K562 (cell line): ENCODE measurements at regions of chr3 and their contacts with region 1.

Region 1: GRCh38 chr3:44198284-44199269 is 43.1 kb upstream of the TOPAZ1 start:
- DNase-seq: peak; percentile 62 to 84 (median 72)
- ATAC-seq: peak; percentile 99
- H3K4me3 ChIP-seq: no peak overlapping the region
- H3K27ac ChIP-seq: no peak overlapping the region
- H3K4me1 ChIP-seq: no peaks in the 10 kb centered on the region; a peak in 1 of 5 replicates
- H3K27me3 ChIP-seq: peaks cover 0 to 7% of the 10 kb centered on the region in 2 experiments; a peak in 2 of 5 replicates
- CTCF ChIP-seq: peak; percentile 84 to 95 (median 88)
- EP300 ChIP-seq: no peak
- POLR2A ChIP-seq: no peak
- RAD21 ChIP-seq: peak; percentile 90 to 92

Region 2: GRCh38 chr3:43531835-43532234 is 666.7 kb before region 1 on chr3:
- CTCF ChIA-PET with region 1: no interaction called
- POLR2A ChIA-PET with region 1: no interaction called
- in situ Hi-C with region 1: loop called (anchors 25 kb)
- intact Hi-C with region 1: no loop called
- DNase-seq: no peak
- ATAC-seq: no peak
- H3K4me3 ChIP-seq: no peak overlapping the region
- H3K27ac ChIP-seq: no peak overlapping the region
- H3K4me1 ChIP-seq: no peaks in the 10 kb centered on the region
- H3K27me3 ChIP-seq: no peaks in the 10 kb centered on the region
- CTCF ChIP-seq: no peak
- EP300 ChIP-seq: no peak
- POLR2A ChIP-seq: no peak
- RAD21 ChIP-seq: no peak

Region 3: GRCh38 chr3:43879166-43879565 is 319.4 kb before region 1 on chr3:
- CTCF ChIA-PET with region 1: interaction called, 4 read pairs
- POLR2A ChIA-PET with region 1: no interaction called
- in situ Hi-C with region 1: no loop called
- intact Hi-C with region 1: loop called (anchors 5 kb)
- DNase-seq: peak in 2 of 4 experiments; percentile 22
- ATAC-seq: peak; percentile 75
- H3K4me3 ChIP-seq: no peak overlapping the region
- H3K27ac ChIP-seq: no peak overlapping the region
- H3K4me1 ChIP-seq: no peaks in the 10 kb centered on the region
- H3K27me3 ChIP-seq: peaks cover 12 to 27% of the 10 kb centered on the region in 2 experiments
- CTCF ChIP-seq: peak; percentile 39 to 49 (median 45); a peak in 5 of 6 replicates
- EP300 ChIP-seq: no peak
- POLR2A ChIP-seq: no peak
- RAD21 ChIP-seq: peak in 1 of 2 experiments; percentile 45; a peak in 2 of 4 replicates

Region 4: DNA sequence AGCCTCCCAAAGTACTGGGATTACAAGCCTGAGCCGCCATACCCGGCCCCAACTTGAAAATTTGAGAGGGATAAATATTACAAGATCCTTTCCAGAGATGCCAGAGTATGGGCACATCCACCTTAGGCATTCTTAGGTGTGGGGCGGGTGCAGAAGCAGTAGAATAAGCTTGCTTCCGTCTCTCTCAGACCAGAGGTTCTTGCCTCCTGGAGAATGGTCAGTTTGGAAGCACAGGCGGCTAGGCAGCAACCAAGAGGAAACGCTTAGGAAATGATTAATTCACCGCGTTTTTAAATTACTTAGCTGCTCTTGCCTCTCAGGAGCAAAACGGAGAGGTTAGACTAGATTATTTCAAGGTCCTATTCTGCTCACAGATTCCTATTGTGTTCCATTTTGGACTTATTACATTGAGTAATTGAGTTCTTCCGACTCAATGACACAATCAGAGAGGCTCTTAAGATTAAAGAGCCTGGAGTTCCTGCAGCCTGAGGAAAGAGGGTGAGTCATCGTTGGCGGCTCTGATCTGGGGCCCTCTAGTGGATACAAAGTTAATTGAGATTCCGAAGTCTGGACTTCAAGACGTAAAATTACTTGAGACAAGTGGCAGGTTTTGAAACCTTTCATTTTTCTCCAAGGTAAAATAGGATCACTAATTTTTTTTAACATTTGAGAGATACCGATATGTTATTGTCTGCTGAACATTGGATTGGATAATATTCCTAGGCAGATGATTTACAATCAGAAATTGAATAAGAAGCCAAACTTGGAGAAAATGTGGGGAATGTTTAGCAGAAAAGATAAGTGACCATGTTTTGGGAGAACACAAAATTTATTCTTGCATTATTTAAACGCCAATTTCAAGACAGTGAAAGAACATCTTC is 37.3 kb after region 1 on chr3:
- CTCF ChIA-PET with region 1: no interaction called
- POLR2A ChIA-PET with region 1: no interaction called
- in situ Hi-C with region 1: no loop called
- intact Hi-C with region 1: no loop called
- DNase-seq: peak; percentile 80 to 93 (median 84)
- ATAC-seq: peak; percentile 89
- H3K4me3 ChIP-seq: no peak overlapping the region
- H3K27ac ChIP-seq: peak overlapping the region; percentile 86
- H3K4me1 ChIP-seq: peaks cover 10 to 47% of the 10 kb centered on the region in 2 experiments
- H3K27me3 ChIP-seq: no peaks in the 10 kb centered on the region
- CTCF ChIP-seq: peak; percentile 73 to 91 (median 89)
- EP300 ChIP-seq: peak; percentile 67
- POLR2A ChIP-seq: 0 out of 2 replicates have a peak, but pooled peaks have one; percentile 12
- RAD21 ChIP-seq: peak; percentile 60 to 66

Region 5: DNA sequence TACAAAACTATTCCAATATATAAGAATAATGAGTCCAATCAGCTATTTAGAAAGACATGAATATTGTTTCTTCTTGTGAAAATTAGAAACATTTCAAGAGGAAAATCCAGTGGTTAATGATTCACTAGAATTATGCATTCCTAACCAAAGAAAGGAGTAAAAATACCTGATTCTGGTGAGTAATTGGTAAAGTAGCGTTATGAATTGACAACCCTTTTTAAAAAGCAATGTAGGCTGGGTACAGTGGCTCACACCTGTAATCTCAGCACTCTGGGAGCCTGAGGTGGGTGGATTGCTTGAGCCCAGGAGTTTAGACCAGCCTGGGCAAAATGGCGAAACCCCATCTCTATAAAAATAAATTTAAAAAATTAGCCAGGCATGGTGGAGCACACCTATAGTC is 86.4 kb after region 1 on chr3:
- CTCF ChIA-PET with region 1: no interaction called
- POLR2A ChIA-PET with region 1: no interaction called
- in situ Hi-C with region 1: no loop called
- intact Hi-C with region 1: no loop called
- DNase-seq: no peak
- ATAC-seq: no peak
- H3K4me3 ChIP-seq: no peak overlapping the region
- H3K27ac ChIP-seq: no peak overlapping the region
- H3K4me1 ChIP-seq: no peaks in the 10 kb centered on the region; a peak in 1 of 5 replicates
- H3K27me3 ChIP-seq: no peaks in the 10 kb centered on the region
- CTCF ChIP-seq: no peak
- EP300 ChIP-seq: no peak
- POLR2A ChIP-seq: no peak
- RAD21 ChIP-seq: no peak